Activated CD4-positive, alpha-beta T cell treated with anti-CD3 and anti-CD28 coated beads for 36 hours (primary cell): ENCODE measurements at regions of chr19 and their contacts with region 1.

Region 1: DNA sequence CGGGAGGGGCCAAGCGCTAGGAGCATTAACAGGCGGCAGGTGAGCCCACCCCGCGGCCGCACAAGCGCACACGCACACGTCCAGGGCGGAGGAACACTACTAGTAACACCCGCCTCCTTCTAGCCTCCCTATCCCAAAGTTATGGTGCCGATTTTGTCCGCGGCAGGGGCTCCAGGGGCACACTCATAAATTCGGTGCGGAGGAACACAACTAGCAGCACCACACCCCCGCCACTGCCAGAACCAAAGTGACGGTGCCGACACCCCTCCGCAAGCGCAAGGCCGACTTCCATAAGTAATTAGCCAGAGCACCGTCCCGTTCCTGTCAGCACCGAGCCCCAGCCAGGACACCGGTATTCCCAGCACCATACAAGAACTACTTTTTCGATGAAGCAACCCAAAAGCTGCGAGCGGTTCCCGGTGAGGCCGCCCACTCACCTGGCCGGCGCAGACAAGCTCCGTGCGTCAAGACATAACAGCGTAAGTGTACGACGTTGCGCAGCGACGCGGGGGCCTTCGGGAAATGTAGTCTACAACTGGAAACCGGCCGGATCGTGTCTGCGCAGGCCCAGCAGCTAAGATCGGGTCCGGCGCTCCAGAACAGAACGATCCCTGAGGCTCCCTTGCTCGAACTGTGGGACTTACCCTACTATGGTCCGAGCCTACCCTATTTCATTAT is at the starts of genes ZNF540 and ZNF571:
- DNase-seq: peak; percentile 97
- ATAC-seq: peak; percentile 97
- H3K4me3 Mint-ChIP-seq: peak within 1 kb of the TSS; percentile 94
- H3K27ac Mint-ChIP-seq: peak within 1 kb of the TSS; percentile 99
- H3K4me1 Mint-ChIP-seq: peaks cover 27% of the 10 kb centered on the region
- H3K27me3 Mint-ChIP-seq: no peaks in the 10 kb centered on the region
- total RNA-seq, gene ZNF540: 0.67 to 1.1 TPM
- total RNA-seq, gene ZNF571: 2.4 to 2.9 TPM

Region 2: DNA sequence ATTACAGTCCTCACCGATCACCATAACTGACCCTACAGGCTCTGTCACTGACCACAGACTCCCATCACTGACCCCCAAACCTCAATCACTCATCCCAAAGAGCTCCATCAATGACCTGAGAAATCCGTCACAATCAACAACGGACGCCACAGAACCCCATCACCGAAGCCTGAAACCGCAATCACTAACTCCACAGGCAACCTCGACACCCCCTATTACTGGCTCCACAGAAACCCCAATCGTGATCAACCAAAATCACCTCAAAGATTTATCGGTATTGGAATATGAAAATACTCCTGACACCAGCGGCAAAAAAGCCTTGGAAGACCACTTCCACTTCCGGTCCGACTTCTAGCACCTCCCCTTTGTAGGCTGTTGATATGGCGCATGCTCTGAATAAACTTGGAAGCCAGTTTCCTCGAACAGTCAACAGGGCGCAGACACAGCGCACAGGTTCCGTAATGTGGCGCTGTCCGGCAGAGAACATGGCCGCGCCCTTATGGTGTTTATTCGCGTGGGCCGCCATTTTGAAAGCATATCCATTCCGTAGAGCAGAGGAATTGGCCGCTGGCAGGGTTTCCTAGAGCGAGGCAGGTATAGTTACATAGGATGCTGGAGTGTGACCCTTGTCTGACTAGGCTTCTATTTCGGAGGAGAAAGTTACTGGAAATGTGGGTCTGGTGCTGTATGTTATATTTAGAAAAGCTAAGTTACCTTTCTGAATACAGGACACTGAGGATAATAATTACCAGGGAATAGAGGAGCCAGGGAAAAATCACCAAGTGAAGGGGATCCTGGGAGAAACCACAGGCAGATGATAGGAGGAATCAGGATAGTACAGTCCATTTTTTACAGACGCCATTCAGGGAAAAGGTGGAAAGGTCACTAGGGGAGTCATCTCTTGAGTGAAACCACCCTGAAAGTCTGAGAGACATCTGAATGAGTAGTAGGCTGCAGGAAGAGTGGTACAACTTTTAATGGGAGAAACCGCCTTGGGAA is 421.8 kb before region 1 on chr19 and contains the start of gene ZNF585A:
- CTCF ChIA-PET with region 1: no interaction called
- POLR2A ChIA-PET with region 1: no interaction called
- intact Hi-C with region 1: loop called in 1 of 2 experiments (anchors 1 kb)
- DNase-seq: peak; percentile 92
- ATAC-seq: peak; percentile 100
- H3K4me3 Mint-ChIP-seq: no peak within 1 kb of the TSS
- H3K27ac Mint-ChIP-seq: no peak within 1 kb of the TSS
- H3K4me1 Mint-ChIP-seq: no peaks in the 10 kb centered on the region
- H3K27me3 Mint-ChIP-seq: no peaks in the 10 kb centered on the region
- total RNA-seq, gene ZNF585A: 8.7 to 9.8 TPM

Region 3: GRCh38 chr19:37334179-37335071 is 260.0 kb before region 1 on chr19:
- CTCF ChIA-PET with region 1: interaction called, 3 read pairs
- POLR2A ChIA-PET with region 1: interaction called, 4 read pairs
- intact Hi-C with region 1: loop called in 1 of 2 experiments (anchors 1 kb)
- DNase-seq: peak; percentile 93
- ATAC-seq: peak; percentile 99
- H3K4me3 Mint-ChIP-seq: peak overlapping the region; percentile 79
- H3K27ac Mint-ChIP-seq: peak overlapping the region; percentile 70
- H3K4me1 Mint-ChIP-seq: peaks cover 34% of the 10 kb centered on the region
- H3K27me3 Mint-ChIP-seq: no peaks in the 10 kb centered on the region

Region 4: DNA sequence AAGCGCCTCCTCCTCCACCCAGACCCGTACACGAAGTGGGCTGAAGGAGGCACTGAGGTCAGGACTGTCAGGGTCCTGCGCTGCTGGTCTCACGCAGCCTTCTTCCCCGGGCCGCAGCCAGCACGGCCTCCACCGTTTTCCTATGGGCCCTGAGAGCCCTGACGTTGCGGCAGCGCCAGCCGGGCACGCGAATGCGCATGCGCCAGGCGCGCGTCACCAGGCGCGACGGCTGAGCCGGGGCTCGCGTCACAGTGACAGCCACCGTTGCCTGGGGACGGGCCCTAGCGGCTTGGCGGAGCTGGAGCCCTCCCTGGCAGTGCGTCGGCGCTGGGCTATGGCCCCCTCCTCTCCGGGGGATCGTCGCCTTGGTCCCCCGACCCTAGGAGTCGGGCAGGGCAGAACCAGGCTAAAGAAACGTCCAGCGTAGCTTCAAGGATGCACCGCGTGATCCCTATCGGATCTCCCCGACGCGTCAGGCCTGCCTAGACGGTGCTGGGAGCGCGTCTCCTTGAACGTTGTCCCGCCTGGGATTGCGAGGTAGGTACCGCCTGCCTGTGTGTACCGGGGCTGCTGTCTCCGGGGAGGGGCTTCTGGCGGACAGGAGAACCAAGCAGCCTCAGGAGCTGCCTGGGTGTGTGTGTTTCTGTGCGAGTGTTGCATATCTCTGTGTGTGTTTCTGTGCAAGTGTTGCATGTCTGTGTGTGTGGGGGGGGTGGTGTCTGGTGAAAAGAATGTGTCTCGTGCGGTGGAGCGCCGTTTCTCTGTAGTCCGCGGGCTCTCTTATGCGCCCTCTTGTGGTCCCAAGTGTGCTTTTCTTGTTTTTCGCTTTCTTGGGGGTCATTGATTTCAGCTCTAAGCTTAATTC is 43.1 kb before region 1 on chr19:
- CTCF ChIA-PET with region 1: interaction called, 8 read pairs
- POLR2A ChIA-PET with region 1: no interaction called
- intact Hi-C with region 1: loop called in 1 of 2 experiments (anchors 1 kb)
- DNase-seq: peak; percentile 87
- ATAC-seq: peak; percentile 86
- H3K4me3 Mint-ChIP-seq: peak overlapping the region; percentile 84
- H3K27ac Mint-ChIP-seq: peak overlapping the region; percentile 87
- H3K4me1 Mint-ChIP-seq: peaks cover 3% of the 10 kb centered on the region
- H3K27me3 Mint-ChIP-seq: no peaks in the 10 kb centered on the region

Region 5: GRCh38 chr19:37691881-37692504 is 97.5 kb after region 1 on chr19:
- CTCF ChIA-PET with region 1: no interaction called
- POLR2A ChIA-PET with region 1: no interaction called
- intact Hi-C with region 1: loop called in 1 of 2 experiments (anchors 1 kb)
- DNase-seq: peak; percentile 93
- ATAC-seq: peak; percentile 96
- H3K4me3 Mint-ChIP-seq: peak overlapping the region; percentile 92
- H3K27ac Mint-ChIP-seq: peak overlapping the region; percentile 95
- H3K4me1 Mint-ChIP-seq: peaks cover 9% of the 10 kb centered on the region
- H3K27me3 Mint-ChIP-seq: no peaks in the 10 kb centered on the region